Activated CD4-positive, alpha-beta T cell treated with anti-CD3 and anti-CD28 coated beads, Interleukin-2, amount 10 ng/mL, durations not matched to agents 24 days and 14 days (primary cell): ENCODE measurements at regions of chr10 and their contacts with region 1.

Region 1: DNA sequence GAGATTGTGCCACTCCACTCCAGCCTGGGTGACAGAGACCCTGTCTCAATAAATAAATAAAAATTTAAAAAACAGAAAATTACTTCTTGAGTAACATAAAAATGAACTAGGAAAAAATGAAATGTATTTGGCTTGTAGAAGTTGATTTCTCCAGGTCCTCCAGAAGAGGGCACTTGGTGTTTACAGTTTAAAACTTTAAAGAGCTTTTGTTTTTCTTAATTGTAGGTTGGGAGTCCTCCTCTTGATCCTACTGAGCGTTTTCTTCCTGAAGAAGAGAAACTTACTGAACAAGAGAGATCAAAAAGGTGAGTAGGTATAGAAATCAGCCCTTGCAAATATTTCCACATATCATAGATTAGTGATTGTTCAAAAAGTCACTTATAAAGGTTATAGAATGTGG is 16.2 kb downstream of the KIFBP start:
- DNase-seq: peak; percentile 66
- H3K4me3 Mint-ChIP-seq: no peak overlapping the region
- H3K27ac Mint-ChIP-seq: no peak overlapping the region
- H3K4me1 Mint-ChIP-seq: peaks cover 2% of the 10 kb centered on the region
- H3K27me3 Mint-ChIP-seq: no peaks in the 10 kb centered on the region

Region 2: GRCh38 chr10:68043030-68043429 is 961.8 kb before region 1 on chr10:
- intact Hi-C with region 1: no loop called
- DNase-seq: no peak
- H3K4me3 Mint-ChIP-seq: no peak overlapping the region
- H3K27ac Mint-ChIP-seq: peak overlapping the region; percentile 67
- H3K4me1 Mint-ChIP-seq: peaks cover 8% of the 10 kb centered on the region
- H3K27me3 Mint-ChIP-seq: no peaks in the 10 kb centered on the region

Region 3: DNA sequence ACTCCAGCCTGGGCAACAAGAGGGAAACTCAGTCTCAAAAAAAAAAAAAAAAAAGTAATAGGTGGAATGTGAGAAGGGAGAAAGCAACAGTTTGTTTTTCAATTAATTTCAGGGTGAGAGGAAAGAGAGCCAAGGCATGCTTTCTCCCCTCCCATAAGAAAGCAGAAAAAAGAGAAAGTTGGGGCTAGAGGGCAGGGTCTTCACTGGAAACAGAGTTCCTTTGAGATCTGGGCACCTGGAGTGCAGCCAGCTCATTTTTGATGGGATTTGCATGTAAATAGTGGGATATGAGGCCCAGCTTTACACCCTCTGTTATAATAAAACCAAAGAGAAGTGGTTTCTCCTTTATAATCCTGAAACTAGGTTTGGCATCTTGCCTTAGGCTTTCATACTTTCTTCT is 191.3 kb before region 1 on chr10:
- intact Hi-C with region 1: no loop called
- DNase-seq: no peak
- H3K4me3 Mint-ChIP-seq: no peak overlapping the region
- H3K27ac Mint-ChIP-seq: no peak overlapping the region
- H3K4me1 Mint-ChIP-seq: no peaks in the 10 kb centered on the region
- H3K27me3 Mint-ChIP-seq: no peaks in the 10 kb centered on the region

Region 4: GRCh38 chr10:69092959-69093850 is 88.4 kb after region 1 on chr10:
- intact Hi-C with region 1: loop called (anchors 1 kb)
- DNase-seq: peak; percentile 95
- H3K4me3 Mint-ChIP-seq: peak overlapping the region; percentile 62
- H3K27ac Mint-ChIP-seq: peak overlapping the region; percentile 76
- H3K4me1 Mint-ChIP-seq: peaks cover 46% of the 10 kb centered on the region
- H3K27me3 Mint-ChIP-seq: no peaks in the 10 kb centered on the region